PC-9 (cell line): ENCODE measurements at regions of chr9 and their contacts with region 1.

Region 1: DNA sequence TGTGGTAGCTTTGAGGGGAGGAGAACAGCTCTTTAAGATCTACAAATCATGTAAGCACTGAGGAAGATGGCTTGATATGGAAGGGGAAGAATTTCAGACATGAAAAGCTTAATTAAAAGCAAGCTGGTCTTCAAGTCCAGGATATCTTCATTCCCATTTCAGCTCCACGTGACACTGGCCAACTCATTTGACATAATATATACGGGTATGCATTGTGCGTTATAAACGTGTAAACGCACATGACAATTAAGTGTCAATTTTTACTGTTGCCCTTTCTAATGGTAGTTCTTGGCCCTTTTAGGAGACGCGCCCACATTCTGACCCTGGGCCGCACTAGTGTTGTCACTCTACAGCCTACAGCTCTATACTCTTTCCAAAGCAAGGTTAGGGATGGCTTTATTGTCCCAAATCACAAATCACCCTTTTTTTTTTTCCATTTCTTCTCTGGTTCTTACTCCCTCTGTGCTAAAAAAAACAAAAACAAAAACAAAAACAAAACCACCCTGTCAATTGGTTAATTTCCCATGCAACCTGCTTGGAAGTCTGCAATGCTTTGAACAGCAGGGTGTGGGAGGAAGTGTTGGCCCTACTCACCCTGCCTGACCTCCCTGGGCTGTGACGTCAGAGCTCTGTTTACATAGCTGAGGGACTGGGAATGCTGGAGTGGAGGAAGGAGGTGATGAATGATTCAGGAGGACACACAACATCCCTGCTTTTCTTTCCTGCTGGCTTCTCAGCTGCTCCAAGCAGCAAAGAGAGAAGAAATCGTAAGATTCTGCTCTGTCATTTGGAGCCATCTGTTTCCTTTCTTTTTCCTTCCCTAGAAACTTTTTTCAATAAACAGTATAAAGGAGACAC is 19.3 kb downstream of the RFK start:
- DNase-seq: peak; percentile 85 to 92
- H3K4me3 ChIP-seq: no peak overlapping the region
- H3K27ac ChIP-seq: peak overlapping the region; percentile 36
- H3K4me1 ChIP-seq: peaks cover 71% of the 10 kb centered on the region
- H3K27me3 ChIP-seq: no peaks in the 10 kb centered on the region
- CTCF ChIP-seq: no peak

Region 2: DNA sequence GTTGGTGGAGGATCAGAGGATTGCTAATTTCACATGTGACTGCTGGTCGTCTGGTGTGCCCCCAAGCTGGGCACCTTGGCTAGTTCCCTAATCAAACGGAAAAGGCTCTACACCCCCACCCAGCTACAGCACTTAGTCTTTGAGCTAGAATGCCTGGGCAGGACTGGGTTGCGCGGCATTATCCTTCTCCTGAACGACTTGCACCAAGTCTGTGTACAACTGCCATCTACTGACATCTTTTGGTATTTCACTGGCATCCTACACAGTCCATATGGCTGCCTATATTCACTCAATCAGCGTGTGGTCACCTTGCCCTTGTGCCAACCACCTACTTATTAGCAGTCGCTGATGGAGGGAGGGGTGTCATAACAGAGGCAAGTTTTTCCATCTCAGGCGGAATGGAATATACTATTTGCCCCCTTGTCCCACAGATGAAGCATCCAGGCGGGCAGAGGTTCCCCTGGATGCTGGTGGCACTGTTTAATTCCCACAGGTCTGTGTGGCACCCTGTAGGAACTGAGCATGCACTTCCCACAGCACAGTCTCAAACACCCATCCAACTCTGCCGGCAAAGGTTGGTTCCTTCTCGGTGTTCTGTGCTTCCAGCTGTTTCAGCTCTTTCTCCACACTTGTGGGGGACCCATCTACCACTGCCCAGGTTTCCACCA is 1136.5 kb before region 1 on chr9:
- CTCF ChIA-PET with region 1: no interaction called
- POLR2A ChIA-PET with region 1: no interaction called
- intact Hi-C with region 1: loop called (anchors 10 kb)
- DNase-seq: peak; percentile 45 to 61
- H3K4me3 ChIP-seq: no peak overlapping the region
- H3K27ac ChIP-seq: no peak overlapping the region
- H3K4me1 ChIP-seq: peaks cover 14% of the 10 kb centered on the region
- H3K27me3 ChIP-seq: no peaks in the 10 kb centered on the region
- CTCF ChIP-seq: peak; percentile 84

Region 3: DNA sequence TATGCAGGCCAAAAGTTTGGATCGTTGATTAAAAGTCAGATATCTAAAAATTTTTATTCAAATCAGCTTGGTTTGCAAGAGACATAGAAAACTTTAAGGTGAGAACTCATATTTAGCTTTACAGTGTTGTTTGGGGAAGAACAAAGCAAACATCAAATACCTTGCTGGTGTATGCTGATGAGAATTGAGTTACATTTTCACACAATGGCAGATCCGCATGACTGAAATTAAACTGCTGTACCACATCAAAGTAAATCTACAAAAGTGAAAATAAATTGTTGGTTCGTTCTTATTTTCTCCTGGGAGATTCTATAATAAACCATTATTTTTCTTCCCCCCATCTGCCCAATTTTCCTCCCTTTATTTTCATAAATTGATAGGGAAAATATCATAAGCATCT is 682.6 kb before region 1 on chr9:
- CTCF ChIA-PET with region 1: no interaction called
- POLR2A ChIA-PET with region 1: no interaction called
- intact Hi-C with region 1: no loop called
- DNase-seq: no peak
- H3K4me3 ChIP-seq: no peak overlapping the region
- H3K27ac ChIP-seq: no peak overlapping the region
- H3K4me1 ChIP-seq: no peaks in the 10 kb centered on the region
- H3K27me3 ChIP-seq: no peaks in the 10 kb centered on the region
- CTCF ChIP-seq: no peak

Region 4: DNA sequence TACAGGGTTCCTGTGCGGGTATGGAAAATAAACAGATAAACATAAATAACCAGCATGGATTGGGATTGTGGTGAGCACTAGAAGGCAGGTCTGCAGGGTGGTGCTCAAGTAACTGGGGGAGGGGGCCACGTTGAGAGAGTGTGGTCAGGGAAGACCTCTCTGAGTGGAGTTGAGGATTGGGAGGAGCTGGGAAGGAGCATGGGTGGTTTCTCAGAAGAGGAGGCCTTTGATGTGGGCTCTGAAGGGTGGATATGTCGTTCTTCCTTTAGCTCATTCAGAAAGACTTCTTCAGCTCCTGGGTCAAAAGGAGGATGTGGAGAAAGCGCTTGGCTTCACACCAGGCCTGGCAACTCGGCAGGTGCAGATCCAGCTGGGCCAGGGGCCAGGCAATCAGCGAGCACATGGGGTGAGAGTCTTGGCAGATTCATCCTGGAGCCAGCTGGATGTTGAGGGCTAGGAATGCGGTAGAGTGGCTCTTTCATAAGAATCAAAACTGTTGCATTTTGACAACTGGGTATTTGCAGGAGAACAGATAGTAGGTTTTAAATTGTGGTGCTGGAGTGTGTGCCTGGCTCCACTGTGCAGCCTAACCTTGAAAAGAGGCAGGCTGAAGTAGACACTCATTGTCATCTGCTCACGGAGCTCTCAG is 412.8 kb before region 1 on chr9:
- CTCF ChIA-PET with region 1: no interaction called
- POLR2A ChIA-PET with region 1: no interaction called
- intact Hi-C with region 1: loop called (anchors 5 kb)
- DNase-seq: peak; percentile 64 to 88
- H3K4me3 ChIP-seq: no peak overlapping the region
- H3K27ac ChIP-seq: peak overlapping the region; percentile 81
- H3K4me1 ChIP-seq: peaks cover 42% of the 10 kb centered on the region
- H3K27me3 ChIP-seq: no peaks in the 10 kb centered on the region
- CTCF ChIP-seq: no peak

Region 5: DNA sequence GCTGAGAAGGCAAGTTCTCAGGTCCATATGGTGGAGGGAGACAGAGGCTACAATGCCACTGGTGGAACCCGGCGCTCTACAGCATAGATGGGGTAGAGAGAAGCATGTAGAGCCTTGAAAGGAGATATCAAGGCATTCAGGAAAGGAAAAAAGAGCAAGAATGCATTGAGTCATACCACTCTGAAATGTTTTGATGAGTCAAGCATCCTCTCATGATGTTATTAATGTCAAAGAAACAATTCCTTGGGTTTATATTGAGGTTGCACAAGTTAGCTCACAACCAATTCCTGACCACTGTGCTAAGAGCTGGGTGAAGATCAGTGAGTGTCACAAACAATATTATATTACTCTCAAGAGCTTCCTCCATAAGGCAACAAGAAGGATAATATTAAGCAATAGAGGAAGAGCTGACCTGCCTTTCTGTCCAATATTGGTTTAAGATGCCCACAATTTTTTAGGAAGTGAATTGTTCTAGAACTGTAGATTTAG is 158.7 kb before region 1 on chr9:
- CTCF ChIA-PET with region 1: no interaction called
- POLR2A ChIA-PET with region 1: interaction called, 3 read pairs
- intact Hi-C with region 1: loop called (anchors 10 kb)
- DNase-seq: peak in 1 of 2 experiments; percentile 97
- H3K4me3 ChIP-seq: no peak overlapping the region
- H3K27ac ChIP-seq: peak overlapping the region; percentile 86
- H3K4me1 ChIP-seq: peaks cover 42% of the 10 kb centered on the region
- H3K27me3 ChIP-seq: no peaks in the 10 kb centered on the region
- CTCF ChIP-seq: no peak

Region 6: GRCh38 chr9:76342862-76343261 is 32.1 kb before region 1 on chr9:
- CTCF ChIA-PET with region 1: no interaction called
- POLR2A ChIA-PET with region 1: no interaction called
- intact Hi-C with region 1: no loop called
- DNase-seq: no peak
- H3K4me3 ChIP-seq: no peak overlapping the region
- H3K27ac ChIP-seq: no peak overlapping the region
- H3K4me1 ChIP-seq: no peaks in the 10 kb centered on the region
- H3K27me3 ChIP-seq: no peaks in the 10 kb centered on the region
- CTCF ChIP-seq: no peak

Region 7: GRCh38 chr9:76353280-76353679 is 21.7 kb before region 1 on chr9:
- CTCF ChIA-PET with region 1: no interaction called
- POLR2A ChIA-PET with region 1: no interaction called
- intact Hi-C with region 1: loop called (anchors 2 kb)
- DNase-seq: peak; percentile 29 to 59
- H3K4me3 ChIP-seq: no peak overlapping the region
- H3K27ac ChIP-seq: no peak overlapping the region
- H3K4me1 ChIP-seq: peaks cover 21% of the 10 kb centered on the region
- H3K27me3 ChIP-seq: no peaks in the 10 kb centered on the region
- CTCF ChIP-seq: no peak

Region 8: GRCh38 chr9:76576344-76576743 is 201.4 kb after region 1 on chr9:
- CTCF ChIA-PET with region 1: no interaction called
- POLR2A ChIA-PET with region 1: no interaction called
- intact Hi-C with region 1: loop called (anchors 10 kb)
- DNase-seq: no peak
- H3K4me3 ChIP-seq: peak overlapping the region; percentile 54; the same call in 1 of the 2 replicates
- H3K27ac ChIP-seq: peak overlapping the region; percentile 88; the same call in 1 of the 2 replicates
- H3K4me1 ChIP-seq: peaks cover 14% of the 10 kb centered on the region
- H3K27me3 ChIP-seq: no peaks in the 10 kb centered on the region
- CTCF ChIP-seq: no peak